PC-9 (cell line): ENCODE measurements at regions of chr2 and their contacts with region 1.

Region 1: GRCh38 chr2:200811336-200812121 is at the start of gene BZW1:
- DNase-seq: peak; percentile 85 to 94
- H3K4me3 ChIP-seq: peak within 1 kb of the TSS; percentile 100
- H3K27ac ChIP-seq: peak within 1 kb of the TSS; percentile 93
- H3K4me1 ChIP-seq: peaks cover 42% of the 10 kb centered on the region
- H3K27me3 ChIP-seq: no peaks in the 10 kb centered on the region
- CTCF ChIP-seq: no peak
- total RNA-seq, gene BZW1: 274 and 300 TPM in 2 replicates

Region 2: DNA sequence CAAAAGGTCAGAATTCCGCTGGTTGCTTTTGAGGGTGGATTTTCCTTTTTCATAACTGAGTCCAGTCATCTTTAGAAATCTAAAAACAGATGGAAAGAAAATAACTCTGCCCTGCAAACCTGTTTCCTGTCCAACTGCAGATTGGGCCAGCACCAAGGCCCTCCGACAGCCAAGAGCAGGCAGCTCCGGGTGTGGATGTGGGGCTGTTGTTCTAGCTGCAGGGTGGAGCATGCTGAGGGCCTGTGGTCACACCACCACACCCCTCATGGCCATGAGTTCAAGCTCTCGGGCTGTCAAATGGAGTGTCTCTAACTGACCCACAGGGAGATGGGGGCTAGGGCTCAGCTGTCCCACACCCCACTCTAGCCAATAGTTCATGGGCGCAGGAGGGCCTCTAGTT is 69.1 kb before region 1 on chr2:
- CTCF ChIA-PET with region 1: interaction called, 6 read pairs
- POLR2A ChIA-PET with region 1: no interaction called
- intact Hi-C with region 1: loop called (anchors 2 kb)
- DNase-seq: no peak
- H3K4me3 ChIP-seq: no peak overlapping the region
- H3K27ac ChIP-seq: peak overlapping the region; percentile 84
- H3K4me1 ChIP-seq: peaks cover 25% of the 10 kb centered on the region
- H3K27me3 ChIP-seq: no peaks in the 10 kb centered on the region
- CTCF ChIP-seq: no peak

Region 3: GRCh38 chr2:200756618-200757321 is 54.8 kb before region 1 on chr2:
- CTCF ChIA-PET with region 1: interaction called, 3 read pairs
- POLR2A ChIA-PET with region 1: interaction called, 12 read pairs
- intact Hi-C with region 1: loop called (anchors 2 kb)
- DNase-seq: peak; percentile 64 to 89
- H3K4me3 ChIP-seq: peak overlapping the region; percentile 2; the same call in 1 of the 2 replicates
- H3K27ac ChIP-seq: peak overlapping the region; percentile 83
- H3K4me1 ChIP-seq: peaks cover 67% of the 10 kb centered on the region
- H3K27me3 ChIP-seq: no peaks in the 10 kb centered on the region
- CTCF ChIP-seq: no peak

Region 4: DNA sequence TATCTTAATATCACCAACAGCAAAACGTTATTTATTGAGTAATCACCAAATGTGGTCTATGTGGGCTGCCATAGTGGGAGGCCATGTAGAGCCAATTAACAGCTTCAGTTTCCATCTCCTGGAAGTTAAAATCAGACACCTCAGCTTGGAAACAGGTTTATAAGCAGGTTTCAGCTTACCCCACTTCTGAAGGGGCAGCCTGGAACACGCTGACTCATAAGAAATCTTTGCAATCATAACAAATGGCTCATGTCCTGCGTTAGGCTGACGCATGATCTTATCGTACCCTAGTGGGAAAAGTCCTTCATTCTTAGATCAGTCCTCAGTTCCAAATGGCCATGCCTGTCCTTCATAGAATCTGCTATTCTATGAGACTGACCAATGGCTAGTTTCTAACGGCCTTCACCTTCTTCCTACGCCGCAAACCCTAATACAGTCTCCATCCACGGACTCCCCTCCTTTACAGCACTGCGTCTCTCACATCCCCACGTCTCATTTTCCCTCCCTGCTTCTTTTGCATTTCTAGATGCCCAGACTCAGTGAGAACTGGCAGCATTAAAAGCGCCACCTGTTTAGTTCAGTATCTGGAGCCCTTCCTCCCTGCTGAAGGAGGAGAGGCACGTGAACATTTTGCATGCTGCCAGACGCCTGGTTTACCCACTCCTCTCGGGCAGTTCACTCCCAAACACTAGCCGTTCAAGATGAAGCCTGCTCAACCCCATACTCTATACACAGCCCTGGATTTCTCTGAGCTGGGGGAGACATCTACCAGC is 24.0 kb before region 1 on chr2:
- CTCF ChIA-PET with region 1: no interaction called
- POLR2A ChIA-PET with region 1: interaction called, 8 read pairs
- intact Hi-C with region 1: loop called (anchors 1 kb)
- DNase-seq: peak; percentile 68 to 96
- H3K4me3 ChIP-seq: peak overlapping the region; percentile 47; the same call in 1 of the 2 replicates
- H3K27ac ChIP-seq: peak overlapping the region; percentile 99
- H3K4me1 ChIP-seq: peaks cover 72% of the 10 kb centered on the region
- H3K27me3 ChIP-seq: no peaks in the 10 kb centered on the region
- CTCF ChIP-seq: no peak